ENCODE measurements at regions of chr7 and their contacts with region 1.

Region 1: GRCh38 chr7:81515009-81515408 is 254.8 kb downstream of the HGF start:
- DNase-seq: peak; percentile 23
- ATAC-seq: peak; percentile 53
- H3K4me3 ChIP-seq: no peak overlapping the region
- H3K27ac ChIP-seq: peak overlapping the region; percentile 50
- H3K4me1 ChIP-seq: peaks cover 28% of the 10 kb centered on the region
- H3K27me3 ChIP-seq: no peaks in the 10 kb centered on the region
- CTCF ChIP-seq: no peak

Region 2: GRCh38 chr7:81604075-81604807 is 89.2 kb after region 1 on chr7:
- CTCF ChIA-PET with region 1: no interaction called
- POLR2A ChIA-PET with region 1: no interaction called
- intact Hi-C with region 1: no loop called
- DNase-seq: peak; percentile 89
- ATAC-seq: peak; percentile 55
- H3K4me3 ChIP-seq: no peak overlapping the region
- H3K27ac ChIP-seq: peak overlapping the region; percentile 92
- H3K4me1 ChIP-seq: peaks cover 23% of the 10 kb centered on the region
- H3K27me3 ChIP-seq: no peaks in the 10 kb centered on the region
- CTCF ChIP-seq: no peak

Region 3: DNA sequence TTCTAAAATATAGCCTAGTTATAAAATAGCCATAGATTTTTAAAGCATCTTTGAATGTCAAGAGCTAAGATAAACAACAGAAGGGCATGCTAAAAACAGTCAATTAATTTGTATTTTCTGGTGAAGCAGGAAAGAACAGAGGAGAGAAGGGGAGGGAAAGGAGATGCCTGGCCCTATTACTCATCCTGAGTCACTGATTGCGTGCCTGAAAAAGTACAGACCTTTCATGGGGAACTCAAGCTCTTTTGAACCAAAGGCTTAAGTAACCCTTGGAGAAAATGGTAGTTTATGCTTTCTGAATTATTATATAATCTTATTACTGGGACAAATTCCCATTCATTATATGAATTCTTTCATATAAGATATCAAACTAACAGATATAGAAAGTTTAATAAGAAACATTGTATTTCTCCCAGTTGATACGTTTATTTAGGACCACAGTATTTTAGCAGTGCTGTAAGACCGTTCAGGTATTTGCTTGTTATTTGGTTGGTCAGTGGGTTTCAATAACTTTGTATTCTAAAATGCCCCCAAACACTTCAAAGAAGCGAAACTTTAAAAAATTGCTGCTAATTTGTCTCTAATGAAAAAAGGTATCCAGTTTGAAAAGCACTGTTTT is 103.5 kb after region 1 on chr7:
- CTCF ChIA-PET with region 1: no interaction called
- POLR2A ChIA-PET with region 1: no interaction called
- intact Hi-C with region 1: loop called (anchors 5 kb)
- DNase-seq: peak; percentile 90
- ATAC-seq: peak; percentile 86
- H3K4me3 ChIP-seq: no peak overlapping the region
- H3K27ac ChIP-seq: peak overlapping the region; percentile 94
- H3K4me1 ChIP-seq: peaks cover 38% of the 10 kb centered on the region
- H3K27me3 ChIP-seq: no peaks in the 10 kb centered on the region
- CTCF ChIP-seq: no peak

Region 4: DNA sequence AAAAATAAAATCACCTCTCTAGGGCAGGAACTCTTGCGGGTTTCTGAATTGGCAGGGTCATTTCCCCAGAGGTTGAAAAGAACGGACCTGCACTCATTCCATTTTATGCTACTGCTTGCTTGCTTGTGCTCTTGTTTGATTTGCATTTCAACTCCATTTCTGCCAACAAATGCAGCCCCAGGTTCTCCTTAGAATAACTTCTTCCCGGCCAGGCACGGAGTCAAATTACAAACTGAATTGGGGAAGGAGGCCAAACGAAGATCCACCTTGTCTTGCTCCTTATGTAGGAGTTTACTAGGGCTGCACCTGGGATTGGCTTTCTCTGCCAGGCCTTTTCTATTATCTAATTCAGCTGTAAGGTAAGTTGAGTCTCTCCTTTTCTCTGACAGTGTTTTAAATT is 175.2 kb after region 1 on chr7:
- CTCF ChIA-PET with region 1: no interaction called
- POLR2A ChIA-PET with region 1: no interaction called
- intact Hi-C with region 1: loop called (anchors 5 kb)
- DNase-seq: peak; percentile 66
- ATAC-seq: peak; percentile 59
- H3K4me3 ChIP-seq: peak overlapping the region; percentile 50
- H3K27ac ChIP-seq: peak overlapping the region; percentile 89
- H3K4me1 ChIP-seq: peaks cover 59% of the 10 kb centered on the region
- H3K27me3 ChIP-seq: no peaks in the 10 kb centered on the region
- CTCF ChIP-seq: no peak